Activated B cell treated with CpG ODN at 0.5 μM for 24 hours (primary cell): ENCODE measurements at regions of chr7 and their contacts with region 1.

Region 1: GRCh38 chr7:105399043-105399725 is 10.5 kb upstream of the SRPK2 start:
- DNase-seq: no peak
- ATAC-seq: no peak
- H3K4me3 Mint-ChIP-seq: no peak overlapping the region
- H3K27ac Mint-ChIP-seq: no peak overlapping the region
- H3K4me1 Mint-ChIP-seq: no peaks in the 10 kb centered on the region
- H3K27me3 Mint-ChIP-seq: no peaks in the 10 kb centered on the region
- CTCF ChIP-seq: no peak

Region 2: GRCh38 chr7:105268511-105269392 is 130.4 kb before region 1 on chr7:
- CTCF ChIA-PET with region 1: no interaction called
- POLR2A ChIA-PET with region 1: no interaction called
- intact Hi-C with region 1: no loop called
- DNase-seq: no peak
- ATAC-seq: peak; percentile 74
- H3K4me3 Mint-ChIP-seq: peak overlapping the region; percentile 83
- H3K27ac Mint-ChIP-seq: peak overlapping the region; percentile 93
- H3K4me1 Mint-ChIP-seq: peaks cover 60% of the 10 kb centered on the region
- H3K27me3 Mint-ChIP-seq: no peaks in the 10 kb centered on the region
- CTCF ChIP-seq: no peak

Region 3: DNA sequence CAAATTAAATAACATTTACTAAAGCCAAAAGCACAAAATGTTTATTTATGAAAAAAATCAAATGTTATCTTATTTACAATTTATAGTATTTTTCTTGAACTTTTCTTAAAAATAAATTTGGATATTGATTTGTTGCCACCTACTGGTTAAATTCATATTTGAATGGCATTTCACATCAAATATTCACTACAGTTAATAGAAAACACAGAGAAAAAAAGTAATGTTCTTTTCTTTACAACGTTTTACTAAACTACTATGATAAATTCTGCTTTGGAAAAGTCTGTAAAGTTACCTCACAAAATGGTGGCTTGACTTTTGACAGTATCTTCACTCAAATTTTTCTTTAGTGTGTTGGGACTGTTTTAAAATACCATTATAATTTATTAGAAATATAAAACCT is 63.2 kb before region 1 on chr7:
- CTCF ChIA-PET with region 1: no interaction called
- POLR2A ChIA-PET with region 1: no interaction called
- intact Hi-C with region 1: no loop called
- DNase-seq: no peak
- ATAC-seq: no peak
- H3K4me3 Mint-ChIP-seq: no peak overlapping the region
- H3K27ac Mint-ChIP-seq: no peak overlapping the region
- H3K4me1 Mint-ChIP-seq: peaks cover 28% of the 10 kb centered on the region
- H3K27me3 Mint-ChIP-seq: no peaks in the 10 kb centered on the region
- CTCF ChIP-seq: no peak

Region 4: GRCh38 chr7:105589356-105590077 is 190.3 kb after region 1 on chr7:
- CTCF ChIA-PET with region 1: no interaction called
- POLR2A ChIA-PET with region 1: no interaction called
- intact Hi-C with region 1: loop called (anchors 1 kb)
- DNase-seq: no peak
- ATAC-seq: peak; percentile 89
- H3K4me3 Mint-ChIP-seq: no peak overlapping the region
- H3K27ac Mint-ChIP-seq: peak overlapping the region; percentile 27
- H3K4me1 Mint-ChIP-seq: peaks cover 38% of the 10 kb centered on the region
- H3K27me3 Mint-ChIP-seq: no peaks in the 10 kb centered on the region
- CTCF ChIP-seq: no peak